ENCODE measurements at regions of chr1 and their contacts with region 1.

Region 1: DNA sequence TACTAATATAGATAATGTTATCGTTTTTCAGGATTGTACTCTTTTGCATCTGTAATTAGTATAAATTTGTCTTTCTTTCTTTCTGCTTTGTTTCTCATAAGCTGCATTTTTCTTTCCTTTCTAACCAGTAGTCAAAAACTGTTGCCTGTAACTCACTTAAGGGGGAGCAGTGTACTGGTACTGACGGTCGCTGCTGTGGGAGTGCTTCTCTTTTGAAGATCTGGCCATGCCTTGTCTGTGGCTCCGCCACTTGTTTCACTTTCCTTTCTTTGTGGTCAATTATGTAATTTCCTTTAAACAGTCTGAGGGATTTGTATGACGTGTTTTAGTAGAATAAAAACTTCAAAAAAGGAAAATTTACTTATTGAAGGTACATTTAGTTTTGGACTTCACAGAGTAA is 37.0 kb downstream of the MIA3 start:
- DNase-seq: no peak
- ATAC-seq: no peak
- H3K4me3 ChIP-seq: no peak overlapping the region
- H3K27ac ChIP-seq: no peak overlapping the region
- H3K4me1 ChIP-seq: no peaks in the 10 kb centered on the region
- H3K27me3 ChIP-seq: no peaks in the 10 kb centered on the region
- CTCF ChIP-seq: no peak

Region 2: GRCh38 chr1:222643938-222644635 is 10.8 kb before region 1 on chr1:
- intact Hi-C with region 1: loop called in 1 of 2 experiments (anchors 1 kb)
- DNase-seq: peak; percentile 98 to 99
- ATAC-seq: peak; percentile 99 to 100 (median 100)
- H3K4me3 ChIP-seq: peak overlapping the region; percentile 93
- H3K27ac ChIP-seq: peak overlapping the region; percentile 97
- H3K4me1 ChIP-seq: peaks cover 10% of the 10 kb centered on the region
- H3K27me3 ChIP-seq: no peaks in the 10 kb centered on the region
- CTCF ChIP-seq: no peak

Region 3: GRCh38 chr1:222728746-222729145 is 73.9 kb after region 1 on chr1:
- intact Hi-C with region 1: loop called (anchors 5 kb)
- DNase-seq: no peak
- ATAC-seq: no peak
- H3K4me3 ChIP-seq: no peak overlapping the region
- H3K27ac ChIP-seq: no peak overlapping the region
- H3K4me1 ChIP-seq: no peaks in the 10 kb centered on the region
- H3K27me3 ChIP-seq: no peaks in the 10 kb centered on the region
- CTCF ChIP-seq: no peak

Measured in psoas muscle (tissue), 8 donors.